Endothelial cell of umbilical vein (primary cell): ENCODE measurements at regions of chr18 and their contacts with region 1.

Region 1: GRCh38 chr18:29164020-29164706 is 987.2 kb upstream of the CDH2 start:
- DNase-seq: peak; percentile 91
- H3K4me3 ChIP-seq: peak overlapping the region in 1 of 3 experiments; percentile 27
- H3K27ac ChIP-seq: peak overlapping the region; percentile 100
- H3K4me1 ChIP-seq: peaks cover 53% of the 10 kb centered on the region
- H3K27me3 ChIP-seq: no peaks in the 10 kb centered on the region
- CTCF ChIP-seq: no peak
- POLR2A ChIP-seq: peak; percentile 62

Region 2: GRCh38 chr18:28204154-28204553 is 960.0 kb before region 1 on chr18:
- CTCF ChIA-PET with region 1: no interaction called
- POLR2A ChIA-PET with region 1: no interaction called
- dilution Hi-C with region 1: no loop called
- intact Hi-C with region 1: loop called (anchors 1 kb)
- DNase-seq: peak; percentile 83
- H3K4me3 ChIP-seq: no peak overlapping the region
- H3K27ac ChIP-seq: peak overlapping the region; percentile 93
- H3K4me1 ChIP-seq: peaks cover 16% of the 10 kb centered on the region
- H3K27me3 ChIP-seq: no peaks in the 10 kb centered on the region
- CTCF ChIP-seq: no peak
- POLR2A ChIP-seq: no peak

Region 3: GRCh38 chr18:28767727-28768211 is 396.4 kb before region 1 on chr18:
- CTCF ChIA-PET with region 1: no interaction called
- POLR2A ChIA-PET with region 1: no interaction called
- dilution Hi-C with region 1: no loop called
- intact Hi-C with region 1: loop called (anchors 10 kb)
- DNase-seq: peak; percentile 75
- H3K4me3 ChIP-seq: no peak overlapping the region
- H3K27ac ChIP-seq: peak overlapping the region; percentile 65
- H3K4me1 ChIP-seq: peaks cover 33% of the 10 kb centered on the region
- H3K27me3 ChIP-seq: no peaks in the 10 kb centered on the region
- CTCF ChIP-seq: no peak
- POLR2A ChIP-seq: no peak

Region 4: GRCh38 chr18:28905509-28905908 is 258.7 kb before region 1 on chr18:
- CTCF ChIA-PET with region 1: no interaction called
- POLR2A ChIA-PET with region 1: no interaction called
- dilution Hi-C with region 1: no loop called
- intact Hi-C with region 1: loop called (anchors 10 kb)
- DNase-seq: peak; percentile 49
- H3K4me3 ChIP-seq: no peak overlapping the region
- H3K27ac ChIP-seq: no peak overlapping the region
- H3K4me1 ChIP-seq: peaks cover 10% of the 10 kb centered on the region
- H3K27me3 ChIP-seq: no peaks in the 10 kb centered on the region
- CTCF ChIP-seq: no peak
- POLR2A ChIP-seq: no peak

Region 5: GRCh38 chr18:28961669-28962228 is 202.4 kb before region 1 on chr18:
- CTCF ChIA-PET with region 1: no interaction called
- POLR2A ChIA-PET with region 1: no interaction called
- dilution Hi-C with region 1: no loop called
- intact Hi-C with region 1: loop called (anchors 10 kb)
- DNase-seq: peak; percentile 43
- H3K4me3 ChIP-seq: no peak overlapping the region
- H3K27ac ChIP-seq: no peak overlapping the region
- H3K4me1 ChIP-seq: peaks cover 8% of the 10 kb centered on the region
- H3K27me3 ChIP-seq: no peaks in the 10 kb centered on the region
- CTCF ChIP-seq: peak; percentile 50 to 51
- POLR2A ChIP-seq: no peak

Region 6: GRCh38 chr18:29078273-29078672 is 85.9 kb before region 1 on chr18:
- CTCF ChIA-PET with region 1: no interaction called
- POLR2A ChIA-PET with region 1: no interaction called
- dilution Hi-C with region 1: no loop called
- intact Hi-C with region 1: no loop called
- DNase-seq: no peak
- H3K4me3 ChIP-seq: no peak overlapping the region
- H3K27ac ChIP-seq: no peak overlapping the region
- H3K4me1 ChIP-seq: no peaks in the 10 kb centered on the region
- H3K27me3 ChIP-seq: no peaks in the 10 kb centered on the region
- CTCF ChIP-seq: no peak
- POLR2A ChIP-seq: no peak